Naive thymus-derived CD4-positive, alpha-beta T cell (primary cell): ENCODE measurements at regions of chr2 and their contacts with region 1.

Region 1: DNA sequence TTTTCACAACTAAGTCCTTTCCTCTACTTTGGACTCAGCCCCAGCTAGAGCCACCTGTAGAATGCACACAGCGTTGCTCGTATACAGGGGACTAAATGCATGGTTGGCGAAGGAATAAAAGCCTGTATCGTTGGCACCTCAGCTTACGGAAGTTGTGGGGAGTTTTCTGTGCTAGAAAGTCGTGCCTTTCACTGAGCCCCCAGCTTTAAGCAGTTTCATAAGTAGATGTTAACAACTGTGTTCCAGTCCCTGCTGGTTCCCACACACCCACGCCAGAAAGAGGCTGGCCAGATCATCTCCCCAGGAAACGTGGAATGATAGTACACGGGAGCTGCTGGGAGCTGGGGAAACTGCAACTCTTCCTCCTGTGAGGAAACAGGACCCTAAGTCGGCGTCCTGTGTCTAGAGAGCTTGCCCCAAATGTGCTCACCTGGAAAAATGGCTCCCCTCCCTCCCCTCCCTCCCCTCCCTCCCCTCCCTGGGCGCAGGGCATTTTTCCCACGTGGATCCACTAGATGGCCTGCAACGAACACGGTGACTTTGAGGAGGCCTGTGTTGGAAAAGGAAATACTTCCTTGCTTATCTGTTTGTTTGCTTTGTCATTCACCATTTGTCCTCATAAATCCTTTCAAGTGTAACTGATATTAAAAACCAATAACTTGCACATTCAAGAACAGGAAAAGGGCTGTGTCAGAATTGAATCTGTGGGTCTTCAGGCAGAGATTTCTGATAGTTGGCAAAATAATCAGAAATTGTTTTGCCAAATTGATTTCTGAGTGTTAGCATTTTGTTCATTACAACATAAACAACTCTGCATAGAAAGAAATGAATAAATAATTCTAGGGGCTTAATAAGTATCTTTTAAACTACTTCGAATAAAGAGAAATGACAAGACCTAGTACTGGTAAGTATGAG is 43.9 kb upstream of the RFX8 start:
- DNase-seq: no peak
- ATAC-seq: no peak
- H3K4me3 ChIP-seq: no peak overlapping the region
- H3K4me3 Mint-ChIP-seq: no peak overlapping the region
- H3K27ac ChIP-seq: no peak overlapping the region
- H3K27ac Mint-ChIP-seq: no peak overlapping the region
- H3K4me1 ChIP-seq: peaks cover 6 to 15% of the 10 kb centered on the region in 2 donors
- H3K4me1 Mint-ChIP-seq: peaks cover 20 to 50% (median 46%) of the 10 kb centered on the region in 7 donors
- H3K27me3 ChIP-seq: no peaks in the 10 kb centered on the region
- H3K27me3 Mint-ChIP-seq: peaks cover 0 to 3% (median 0%) of the 10 kb centered on the region in 5 donors

Region 2: GRCh38 chr2:101558740-101559519 is 40.1 kb after region 1 on chr2:
- CTCF ChIA-PET with region 1: no interaction called
- POLR2A ChIA-PET with region 1: no interaction called
- intact Hi-C with region 1: loop called in 1 of 2 experiments (anchors 5 kb)
- DNase-seq: no peak
- ATAC-seq: no peak
- H3K4me3 ChIP-seq: no peak overlapping the region
- H3K4me3 Mint-ChIP-seq: peak overlapping the region in 1 of 10 donors; percentile 17
- H3K27ac ChIP-seq: no peak overlapping the region
- H3K27ac Mint-ChIP-seq: peak overlapping the region in 1 of 9 donors; percentile 28
- H3K4me1 ChIP-seq: peaks cover 13 to 32% of the 10 kb centered on the region in 2 donors
- H3K4me1 Mint-ChIP-seq: peaks cover 28 to 43% (median 37%) of the 10 kb centered on the region in 7 donors
- H3K27me3 ChIP-seq: no peaks in the 10 kb centered on the region
- H3K27me3 Mint-ChIP-seq: no peaks in the 10 kb centered on the region